ENCODE measurements at regions of chr18 and their contacts with region 1.

Region 1: GRCh38 chr18:47772374-47773248 is 157.8 kb downstream of the SMAD2 start:
- DNase-seq: peak; percentile 87
- H3K4me3 ChIP-seq: no peak overlapping the region
- H3K27ac ChIP-seq: no peak overlapping the region
- H3K4me1 ChIP-seq: peaks cover 0 to 6% (median 5%) of the 10 kb centered on the region in 6 donors
- H3K27me3 ChIP-seq: peaks cover 0 to 4% (median 0%) of the 10 kb centered on the region in 7 donors
- CTCF ChIP-seq: peak; percentile 46 to 88 (median 79)
- POLR2A ChIP-seq: no peak

Region 2: GRCh38 chr18:48022531-48023329 is 250.1 kb after region 1 on chr18:
- intact Hi-C with region 1: loop called (anchors 5 kb)
- DNase-seq: no peak
- H3K4me3 ChIP-seq: no peak overlapping the region
- H3K27ac ChIP-seq: peak overlapping the region in 5 of 8 donors; percentile 55 to 71 (median 68)
- H3K4me1 ChIP-seq: peaks cover 5 to 66% (median 34%) of the 10 kb centered on the region in 6 donors
- H3K27me3 ChIP-seq: peaks cover 0 to 33% (median 0%) of the 10 kb centered on the region in 7 donors
- CTCF ChIP-seq: peak in 10 of 11 experiments; percentile 11 to 68 (median 52)
- POLR2A ChIP-seq: no peak

Measured in spleen (tissue), 13 donors.